ENCODE measurements at regions of chr16 and their contacts with region 1.

Region 1: DNA sequence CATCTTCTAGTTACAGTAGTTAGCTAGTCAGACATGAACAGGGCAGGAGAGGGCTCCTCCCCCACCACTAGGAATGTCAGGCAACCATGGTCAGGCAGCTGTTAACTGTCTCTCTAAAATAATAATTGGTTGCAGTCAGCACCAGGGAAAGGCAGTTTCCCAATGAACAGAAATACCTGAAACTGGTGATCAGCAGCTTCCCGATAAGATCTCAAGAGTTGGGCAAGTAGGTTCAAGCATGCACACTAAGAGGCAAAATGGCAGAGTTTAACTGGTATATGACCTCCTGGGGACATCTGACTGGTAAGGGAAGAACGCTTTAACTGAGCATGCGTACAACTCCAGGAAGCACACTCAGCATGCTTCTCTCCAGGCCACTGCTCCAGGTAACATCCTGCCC is 12.6 kb upstream of the XYLT1 start:
- DNase-seq: no peak
- ATAC-seq: no peak
- H3K4me3 ChIP-seq: no peak overlapping the region
- H3K4me3 Mint-ChIP-seq: no peak overlapping the region
- H3K27ac ChIP-seq: no peak overlapping the region
- H3K27ac Mint-ChIP-seq: no peak overlapping the region
- H3K4me1 ChIP-seq: no peaks in the 10 kb centered on the region
- H3K4me1 Mint-ChIP-seq: no peaks in the 10 kb centered on the region
- H3K27me3 ChIP-seq: peaks cover 0 to 2% of the 10 kb centered on the region in 2 experiments
- H3K27me3 Mint-ChIP-seq: peaks cover 17% of the 10 kb centered on the region
- CTCF ChIP-seq: no peak

Region 2: GRCh38 chr16:17432901-17433576 is 50.3 kb before region 1 on chr16:
- CTCF ChIA-PET with region 1: no interaction called
- POLR2A ChIA-PET with region 1: no interaction called
- intact Hi-C with region 1: no loop called
- DNase-seq: no peak
- ATAC-seq: no peak
- H3K4me3 ChIP-seq: no peak overlapping the region
- H3K4me3 Mint-ChIP-seq: no peak overlapping the region
- H3K27ac ChIP-seq: no peak overlapping the region
- H3K27ac Mint-ChIP-seq: no peak overlapping the region
- H3K4me1 ChIP-seq: peaks cover 3% of the 10 kb centered on the region
- H3K4me1 Mint-ChIP-seq: peaks cover 42% of the 10 kb centered on the region
- H3K27me3 ChIP-seq: no peaks in the 10 kb centered on the region
- H3K27me3 Mint-ChIP-seq: no peaks in the 10 kb centered on the region
- CTCF ChIP-seq: no peak

Region 3: GRCh38 chr16:17529982-17530765 is 46.8 kb after region 1 on chr16:
- CTCF ChIA-PET with region 1: no interaction called
- POLR2A ChIA-PET with region 1: no interaction called
- intact Hi-C with region 1: loop called in 1 of 2 experiments (anchors 10 kb)
- DNase-seq: peak in 11 of 14 experiments; percentile 6 to 81 (median 27)
- ATAC-seq: peak; percentile 90
- H3K4me3 ChIP-seq: peak overlapping the region; percentile 64
- H3K4me3 Mint-ChIP-seq: peak overlapping the region; percentile 82
- H3K27ac ChIP-seq: peak overlapping the region; percentile 30 to 76
- H3K27ac Mint-ChIP-seq: peak overlapping the region; percentile 80
- H3K4me1 ChIP-seq: peaks cover 13% of the 10 kb centered on the region
- H3K4me1 Mint-ChIP-seq: peaks cover 17% of the 10 kb centered on the region
- H3K27me3 ChIP-seq: no peaks in the 10 kb centered on the region
- H3K27me3 Mint-ChIP-seq: no peaks in the 10 kb centered on the region
- CTCF ChIP-seq: no peak